ENCODE measurements at regions of chr7 and their contacts with region 1.

Region 1: GRCh38 chr7:87797798-87798403 is 78.3 kb downstream of the SLC25A40 start:
- DNase-seq: no peak
- ATAC-seq: peak in 3 of 8 donors; percentile 28 to 41 (median 41)
- H3K4me3 ChIP-seq: no peak overlapping the region
- H3K27ac ChIP-seq: no peak overlapping the region
- H3K4me1 ChIP-seq: no peaks in the 10 kb centered on the region
- H3K27me3 ChIP-seq: no peaks in the 10 kb centered on the region
- CTCF ChIP-seq: peak; percentile 29 to 73 (median 62)

Region 2: GRCh38 chr7:86448856-86449255 is 1349.0 kb before region 1 on chr7:
- intact Hi-C with region 1: no loop called
- DNase-seq: no peak
- ATAC-seq: no peak
- H3K4me3 ChIP-seq: no peak overlapping the region
- H3K27ac ChIP-seq: no peak overlapping the region
- H3K4me1 ChIP-seq: no peaks in the 10 kb centered on the region
- H3K27me3 ChIP-seq: no peaks in the 10 kb centered on the region
- CTCF ChIP-seq: no peak

Region 3: GRCh38 chr7:87886875-87887274 is 89.0 kb after region 1 on chr7:
- intact Hi-C with region 1: loop called in 7 of 10 experiments (anchors 2 to 5 kb)
- DNase-seq: no peak
- ATAC-seq: no peak
- H3K4me3 ChIP-seq: no peak overlapping the region
- H3K27ac ChIP-seq: no peak overlapping the region
- H3K4me1 ChIP-seq: no peaks in the 10 kb centered on the region
- H3K27me3 ChIP-seq: no peaks in the 10 kb centered on the region
- CTCF ChIP-seq: peak in 8 of 9 donors; percentile 18 to 65 (median 54)

Region 4: DNA sequence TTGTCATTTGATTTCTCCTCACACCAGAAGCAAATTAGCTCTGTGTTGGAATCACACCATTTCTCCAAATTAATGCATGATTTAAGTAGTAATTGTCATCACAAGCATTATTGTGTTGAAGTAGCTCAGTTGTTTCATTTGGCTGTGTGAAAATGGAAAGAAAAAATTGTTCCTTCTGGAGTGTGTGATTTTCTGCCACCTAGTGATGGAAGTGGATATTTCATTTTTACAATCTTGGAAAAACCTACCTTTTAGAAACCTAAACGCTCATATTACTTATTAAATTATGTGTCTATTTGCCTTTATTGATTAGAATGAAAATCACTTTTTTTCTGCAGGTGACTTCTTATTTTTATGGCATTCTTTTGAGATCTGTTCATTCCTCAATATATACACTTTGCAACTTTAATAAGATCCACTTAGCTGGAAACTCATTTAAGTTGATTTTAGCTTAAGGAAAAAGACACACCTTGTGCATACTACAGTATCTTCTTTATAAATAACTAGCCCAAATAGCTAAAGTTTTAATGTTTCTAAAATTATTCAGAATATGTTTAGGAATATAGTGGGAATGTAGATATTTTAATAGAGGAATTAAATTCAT is 371.9 kb after region 1 on chr7:
- intact Hi-C with region 1: loop called in 3 of 10 experiments (anchors 2 to 10 kb)
- DNase-seq: no peak
- ATAC-seq: peak in 1 of 8 donors; percentile 39
- H3K4me3 ChIP-seq: no peak overlapping the region
- H3K27ac ChIP-seq: no peak overlapping the region
- H3K4me1 ChIP-seq: no peaks in the 10 kb centered on the region
- H3K27me3 ChIP-seq: no peaks in the 10 kb centered on the region
- CTCF ChIP-seq: peak in 8 of 9 donors; percentile 47 to 71 (median 58)

Region 5: GRCh38 chr7:88452646-88453045 is 654.7 kb after region 1 on chr7:
- intact Hi-C with region 1: no loop called
- DNase-seq: no peak
- ATAC-seq: no peak
- H3K4me3 ChIP-seq: no peak overlapping the region
- H3K27ac ChIP-seq: no peak overlapping the region
- H3K4me1 ChIP-seq: peaks cover 0 to 10% (median 0%) of the 10 kb centered on the region in 9 donors
- H3K27me3 ChIP-seq: no peaks in the 10 kb centered on the region
- CTCF ChIP-seq: no peak